Testis (tissue), 5 donors: ENCODE measurements at regions of chr1 and their contacts with region 1.

Region 1: GRCh38 chr1:153352523-153352922 is 3.9 kb upstream of the PGLYRP4 start:
- DNase-seq: peak; percentile 81
- H3K4me3 ChIP-seq: no peak overlapping the region
- H3K27ac ChIP-seq: no peak overlapping the region
- H3K4me1 ChIP-seq: no peaks in the 10 kb centered on the region
- H3K27me3 ChIP-seq: no peaks in the 10 kb centered on the region
- CTCF ChIP-seq: peak; percentile 61 to 91 (median 84)
- POLR2A ChIP-seq: no peak

Region 2: GRCh38 chr1:153494976-153495535 is 142.5 kb after region 1 on chr1:
- intact Hi-C with region 1: loop called (anchors 10 kb)
- DNase-seq: peak; percentile 81
- H3K4me3 ChIP-seq: no peak overlapping the region
- H3K27ac ChIP-seq: no peak overlapping the region
- H3K4me1 ChIP-seq: no peaks in the 10 kb centered on the region
- H3K27me3 ChIP-seq: no peaks in the 10 kb centered on the region
- CTCF ChIP-seq: peak; percentile 76 to 89 (median 79)
- POLR2A ChIP-seq: no peak

Region 3: GRCh38 chr1:153545067-153546055 is 192.8 kb after region 1 on chr1 and contains the start of gene S100A4:
- intact Hi-C with region 1: no loop called
- DNase-seq: peak; percentile 82
- H3K4me3 ChIP-seq: peak within 1 kb of the TSS; percentile 6
- H3K27ac ChIP-seq: peak within 1 kb of the TSS in 1 of 2 donors; percentile 80
- H3K4me1 ChIP-seq: peaks cover 25% of the 10 kb centered on the region
- H3K27me3 ChIP-seq: no peaks in the 10 kb centered on the region
- CTCF ChIP-seq: no peak
- POLR2A ChIP-seq: no peak
- total RNA-seq, gene S100A4: 15.8 to 23.8 TPM